ENCODE measurements at regions of chr5 and their contacts with region 1.

Region 1: GRCh38 chr5:59188419-59189225 is 605.7 kb downstream of the RAB3C start:
- DNase-seq: peak; percentile 63
- ATAC-seq: peak; percentile 78
- H3K4me3 Mint-ChIP-seq: peak overlapping the region; percentile 32
- H3K27ac Mint-ChIP-seq: no peak overlapping the region
- H3K4me1 Mint-ChIP-seq: peaks cover 19% of the 10 kb centered on the region
- H3K27me3 Mint-ChIP-seq: no peaks in the 10 kb centered on the region
- CTCF ChIP-seq: peak; percentile 74

Region 2: DNA sequence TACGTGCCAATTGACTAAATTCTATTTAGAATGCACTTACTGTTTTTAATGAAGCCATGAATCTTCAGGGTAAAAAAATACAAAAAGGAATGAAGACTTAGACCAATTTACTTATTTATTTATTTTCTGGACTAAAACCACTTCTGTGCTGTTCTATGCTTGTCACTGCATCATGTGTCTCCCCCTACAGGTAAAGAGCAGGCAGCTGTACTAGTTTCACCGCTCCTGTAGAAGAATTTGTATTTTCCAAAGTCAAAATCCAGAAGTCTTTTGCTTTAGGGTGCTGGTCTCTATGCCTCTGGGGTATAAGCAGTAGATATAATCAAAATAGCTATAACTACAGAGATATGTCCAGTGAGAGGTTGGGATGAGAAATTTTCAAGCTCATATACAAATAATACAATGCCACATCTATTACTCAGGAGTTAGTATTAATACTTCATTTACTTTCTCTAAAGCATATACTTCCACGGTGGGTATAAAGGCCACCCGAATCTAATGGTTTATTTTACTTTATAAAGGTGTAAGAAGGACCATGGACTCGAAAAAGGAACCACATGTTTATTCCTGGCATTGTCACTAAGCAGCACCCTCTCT is 14.3 kb before region 1 on chr5:
- CTCF ChIA-PET with region 1: interaction called, 11 read pairs
- POLR2A ChIA-PET with region 1: interaction called, 8 read pairs
- DNase-seq: no peak
- ATAC-seq: peak; percentile 82
- H3K4me3 Mint-ChIP-seq: no peak overlapping the region
- H3K27ac Mint-ChIP-seq: no peak overlapping the region
- H3K4me1 Mint-ChIP-seq: no peaks in the 10 kb centered on the region
- H3K27me3 Mint-ChIP-seq: no peaks in the 10 kb centered on the region
- CTCF ChIP-seq: peak; percentile 60

Region 3: DNA sequence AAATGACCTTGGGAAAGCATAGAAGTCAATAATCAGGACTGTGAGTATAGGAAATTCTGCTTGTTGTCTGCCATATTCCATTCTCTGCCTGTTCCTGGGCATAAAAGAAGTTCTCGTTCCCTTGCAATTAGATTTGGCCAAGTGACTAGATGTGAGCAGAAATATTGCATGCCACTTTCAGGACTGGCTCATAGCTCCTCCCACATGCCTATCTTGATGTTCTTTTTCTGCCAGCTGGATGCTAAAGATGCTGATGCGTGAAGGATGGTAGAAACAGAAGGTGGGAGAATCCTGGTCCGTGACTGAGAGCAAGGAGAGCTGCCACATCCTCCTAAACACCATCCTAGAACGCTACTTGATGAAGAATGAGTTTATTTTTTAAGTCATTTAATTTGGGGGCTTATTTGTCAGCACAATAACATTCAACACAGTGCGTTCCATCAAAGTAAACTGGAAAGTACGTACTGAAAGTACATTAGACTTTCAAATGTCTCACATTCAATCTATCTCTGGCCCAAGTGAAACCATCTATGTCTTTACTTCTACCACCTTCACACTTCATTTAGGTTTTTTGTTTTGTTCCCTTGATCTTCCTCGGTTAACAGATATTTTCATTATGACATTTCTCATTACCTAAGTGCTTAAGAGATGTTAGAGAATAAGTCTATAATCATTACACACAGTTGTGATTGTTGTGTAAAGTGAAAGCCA is 42.8 kb after region 1 on chr5:
- CTCF ChIA-PET with region 1: no interaction called
- POLR2A ChIA-PET with region 1: no interaction called
- DNase-seq: no peak
- ATAC-seq: no peak
- H3K4me3 Mint-ChIP-seq: no peak overlapping the region
- H3K27ac Mint-ChIP-seq: no peak overlapping the region
- H3K4me1 Mint-ChIP-seq: no peaks in the 10 kb centered on the region
- H3K27me3 Mint-ChIP-seq: no peaks in the 10 kb centered on the region
- CTCF ChIP-seq: no peak

Region 4: GRCh38 chr5:59335544-59335943 is 146.9 kb after region 1 on chr5:
- CTCF ChIA-PET with region 1: interaction called, 11 read pairs
- POLR2A ChIA-PET with region 1: no interaction called
- DNase-seq: no peak
- ATAC-seq: no peak
- H3K4me3 Mint-ChIP-seq: no peak overlapping the region
- H3K27ac Mint-ChIP-seq: no peak overlapping the region
- H3K4me1 Mint-ChIP-seq: peaks cover 5% of the 10 kb centered on the region; the same call in 1 of the 2 replicates
- H3K27me3 Mint-ChIP-seq: no peaks in the 10 kb centered on the region
- CTCF ChIP-seq: no peak

Region 5: GRCh38 chr5:59367791-59368394 is 179.3 kb after region 1 on chr5:
- CTCF ChIA-PET with region 1: interaction called, 55 read pairs
- POLR2A ChIA-PET with region 1: no interaction called
- DNase-seq: peak; percentile 50
- ATAC-seq: peak; percentile 64
- H3K4me3 Mint-ChIP-seq: no peak overlapping the region
- H3K27ac Mint-ChIP-seq: no peak overlapping the region
- H3K4me1 Mint-ChIP-seq: peaks cover 13% of the 10 kb centered on the region
- H3K27me3 Mint-ChIP-seq: peaks cover 5% of the 10 kb centered on the region; the same call in 1 of the 2 replicates
- CTCF ChIP-seq: peak; percentile 47; the same call in 1 of the 2 replicates

Region 6: DNA sequence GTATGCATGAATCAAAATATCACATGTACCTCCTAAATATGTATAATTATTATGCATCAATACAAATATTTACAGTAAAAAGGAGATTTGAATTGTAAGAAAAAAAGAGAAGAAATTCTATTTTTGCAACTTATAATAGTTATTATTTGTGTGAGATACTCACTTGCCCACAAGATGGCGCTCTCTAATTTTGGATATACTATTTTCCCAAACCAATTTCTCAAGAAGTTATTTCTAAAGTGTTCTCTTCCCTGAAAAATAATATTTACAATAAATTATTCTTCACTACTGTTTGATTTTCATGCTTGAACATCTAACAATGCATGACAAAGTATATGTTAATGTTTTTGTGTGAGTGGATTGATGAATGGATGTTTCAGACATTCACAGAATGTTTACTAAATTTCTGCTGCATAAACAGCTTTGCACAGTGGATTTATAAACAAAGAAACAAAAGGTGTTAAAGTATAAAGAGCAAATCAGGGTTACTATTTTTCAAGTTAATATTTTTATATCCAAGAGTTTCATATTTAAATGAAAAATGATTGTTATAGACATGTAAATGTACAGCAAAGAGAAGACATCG is 201.5 kb after region 1 on chr5:
- CTCF ChIA-PET with region 1: interaction called, 11 read pairs
- POLR2A ChIA-PET with region 1: interaction called, 4 read pairs
- DNase-seq: no peak
- ATAC-seq: no peak
- H3K4me3 Mint-ChIP-seq: no peak overlapping the region
- H3K27ac Mint-ChIP-seq: no peak overlapping the region
- H3K4me1 Mint-ChIP-seq: peaks cover 16% of the 10 kb centered on the region
- H3K27me3 Mint-ChIP-seq: no peaks in the 10 kb centered on the region
- CTCF ChIP-seq: peak; percentile 71